ENCODE measurements at regions of chr5 and their contacts with region 1.

Region 1: GRCh38 chr5:131252824-131253171 is 11.1 kb upstream of the CDC42SE2 start:
- DNase-seq: peak; percentile 88
- H3K4me3 Mint-ChIP-seq: peak overlapping the region; percentile 94
- H3K27ac Mint-ChIP-seq: peak overlapping the region; percentile 95
- H3K4me1 Mint-ChIP-seq: peaks cover 72% of the 10 kb centered on the region
- H3K27me3 Mint-ChIP-seq: no peaks in the 10 kb centered on the region

Region 2: DNA sequence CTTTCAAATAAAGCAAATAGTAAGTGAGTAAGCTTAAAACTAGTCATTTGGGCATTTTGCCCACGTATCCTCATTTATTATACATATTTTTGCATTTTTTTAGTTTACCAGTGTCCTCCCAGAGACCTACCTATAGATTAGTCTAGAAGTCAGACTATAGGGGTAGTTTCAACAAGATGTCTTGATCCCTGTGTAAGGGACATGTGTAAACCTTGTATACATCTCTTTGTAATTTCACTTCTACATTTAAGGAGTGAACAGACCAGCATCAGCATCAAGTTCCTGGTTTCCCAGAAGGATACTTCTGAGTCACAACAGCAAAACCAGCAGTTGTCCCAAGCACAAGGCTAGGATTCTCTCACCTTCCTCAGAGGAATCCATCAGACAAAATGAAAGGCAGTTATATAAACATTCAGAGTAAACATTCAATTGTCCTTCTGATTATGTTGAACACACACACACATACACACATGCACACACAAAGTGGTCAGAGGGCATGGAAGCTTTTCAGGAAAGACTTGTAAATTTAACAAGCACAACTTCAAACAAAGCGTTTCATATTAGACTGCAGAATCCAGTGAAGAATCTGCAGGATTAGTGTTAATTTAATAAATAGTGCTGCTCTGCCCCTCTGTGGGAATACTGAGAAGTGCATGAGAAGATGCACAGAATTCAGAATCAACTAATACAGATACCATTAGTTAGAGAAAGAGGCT is 143.1 kb before region 1 on chr5:
- CTCF ChIA-PET with region 1: no interaction called
- intact Hi-C with region 1: no loop called
- DNase-seq: peak; percentile 54
- H3K4me3 Mint-ChIP-seq: no peak overlapping the region
- H3K27ac Mint-ChIP-seq: no peak overlapping the region
- H3K4me1 Mint-ChIP-seq: peaks cover 6% of the 10 kb centered on the region
- H3K27me3 Mint-ChIP-seq: no peaks in the 10 kb centered on the region

Region 3: DNA sequence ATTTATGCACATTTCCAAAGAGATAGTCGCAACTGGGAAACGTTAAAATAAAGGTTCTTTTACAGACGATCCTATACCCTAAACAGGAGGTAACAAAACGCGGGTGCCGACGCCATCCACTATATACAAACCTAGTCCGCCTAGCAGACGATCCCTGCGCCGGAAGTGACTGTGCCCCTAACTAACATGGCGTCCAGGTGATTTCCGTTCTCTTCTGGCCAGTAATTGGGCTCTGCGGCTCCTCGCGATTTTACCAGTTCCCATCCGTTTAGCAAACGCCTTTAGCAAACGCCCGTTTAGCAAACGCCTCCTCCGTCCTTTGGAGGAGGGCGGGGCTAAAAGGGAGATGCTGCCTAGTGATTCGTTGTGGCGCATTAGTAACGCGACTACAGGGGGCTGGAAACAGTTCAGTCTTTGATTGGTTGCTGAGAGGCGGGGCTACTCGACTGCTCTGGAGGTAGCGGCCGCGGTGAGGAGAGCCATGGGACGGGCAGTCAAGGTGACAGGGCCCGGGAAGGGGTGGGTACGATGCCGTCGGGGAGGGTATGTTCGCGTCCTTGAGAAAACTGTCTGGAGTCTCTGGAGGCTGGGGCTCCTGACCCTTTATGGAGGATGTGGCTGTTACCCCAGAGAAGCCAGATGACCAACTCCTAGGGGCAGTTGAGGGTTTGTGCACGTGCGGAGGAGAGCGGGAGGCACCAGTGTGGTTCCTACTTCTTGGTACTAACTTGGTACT is 82.1 kb before region 1 on chr5 and contains the start of gene LYRM7:
- CTCF ChIA-PET with region 1: no interaction called
- intact Hi-C with region 1: loop called (anchors 1 kb)
- DNase-seq: peak; percentile 98
- H3K4me3 Mint-ChIP-seq: peak within 1 kb of the TSS; percentile 99
- H3K27ac Mint-ChIP-seq: peak within 1 kb of the TSS; percentile 92
- H3K4me1 Mint-ChIP-seq: peaks cover 44% of the 10 kb centered on the region
- H3K27me3 Mint-ChIP-seq: no peaks in the 10 kb centered on the region
- total RNA-seq, gene LYRM7: 14.6 to 15.0 TPM

Region 4: DNA sequence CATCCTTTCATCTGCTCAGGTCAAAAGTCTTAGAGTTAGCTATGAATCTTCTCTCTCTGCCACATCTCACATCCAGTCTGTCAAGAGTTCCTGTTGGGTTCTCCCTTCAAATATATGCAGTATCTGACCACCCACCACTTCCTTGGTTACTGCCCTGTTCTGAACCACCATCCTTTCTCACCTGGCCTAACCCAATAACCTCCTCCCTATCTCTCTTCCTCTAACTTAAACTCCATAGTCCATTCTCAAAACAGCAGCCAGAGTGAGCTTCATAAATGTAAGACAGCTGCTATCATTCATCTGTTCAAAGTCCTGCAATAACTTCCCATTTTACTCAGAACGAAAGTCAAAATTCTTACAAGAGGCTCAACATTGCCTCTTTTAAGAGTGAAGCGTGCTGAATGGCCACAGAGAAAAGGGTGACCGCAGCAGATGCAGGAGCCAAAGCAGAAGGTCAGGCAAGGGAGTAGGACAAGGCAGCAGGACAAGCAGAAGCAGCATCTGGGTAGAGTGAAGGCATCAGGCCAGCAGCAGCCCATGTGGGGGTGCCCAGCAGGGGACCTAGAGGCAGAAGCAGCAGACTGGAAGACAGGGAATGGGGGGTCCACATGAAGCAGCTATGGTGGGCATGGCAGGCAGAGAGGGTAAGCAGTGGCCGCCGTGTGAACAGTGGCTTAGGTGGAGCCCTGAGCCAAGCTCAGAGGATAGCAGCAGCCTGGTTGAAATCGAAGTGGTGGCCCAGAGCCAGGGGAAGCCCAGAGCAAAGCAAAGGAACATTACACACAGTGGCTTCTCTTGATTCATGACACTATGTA is 28.2 kb before region 1 on chr5:
- CTCF ChIA-PET with region 1: interaction called, 5 read pairs
- intact Hi-C with region 1: loop called (anchors 1 kb)
- DNase-seq: peak; percentile 30
- H3K4me3 Mint-ChIP-seq: no peak overlapping the region
- H3K27ac Mint-ChIP-seq: no peak overlapping the region
- H3K4me1 Mint-ChIP-seq: peaks cover 27% of the 10 kb centered on the region
- H3K27me3 Mint-ChIP-seq: no peaks in the 10 kb centered on the region

Region 5: GRCh38 chr5:131263648-131264450 is 11.1 kb after region 1 on chr5 and contains the start of gene CDC42SE2:
- CTCF ChIA-PET with region 1: interaction called, 7 read pairs
- intact Hi-C with region 1: loop called (anchors 1 kb)
- DNase-seq: peak; percentile 81
- H3K4me3 Mint-ChIP-seq: peak within 1 kb of the TSS; percentile 75
- H3K27ac Mint-ChIP-seq: peak within 1 kb of the TSS; percentile 93
- H3K4me1 Mint-ChIP-seq: peaks cover 48% of the 10 kb centered on the region
- H3K27me3 Mint-ChIP-seq: no peaks in the 10 kb centered on the region
- total RNA-seq, gene CDC42SE2: 106 to 108 TPM

Region 6: GRCh38 chr5:131357739-131358561 is 105.2 kb after region 1 on chr5:
- CTCF ChIA-PET with region 1: no interaction called
- intact Hi-C with region 1: loop called (anchors 2 kb)
- DNase-seq: peak; percentile 67
- H3K4me3 Mint-ChIP-seq: peak overlapping the region; percentile 54
- H3K27ac Mint-ChIP-seq: peak overlapping the region; percentile 91
- H3K4me1 Mint-ChIP-seq: peaks cover 67% of the 10 kb centered on the region
- H3K27me3 Mint-ChIP-seq: no peaks in the 10 kb centered on the region

Measured in activated naive CD4-positive, alpha-beta T cell treated with anti-CD3 and anti-CD28 coated beads for 36 hours (primary cell).